ENCODE measurements at regions of chr3 and their contacts with region 1.

Region 1: DNA sequence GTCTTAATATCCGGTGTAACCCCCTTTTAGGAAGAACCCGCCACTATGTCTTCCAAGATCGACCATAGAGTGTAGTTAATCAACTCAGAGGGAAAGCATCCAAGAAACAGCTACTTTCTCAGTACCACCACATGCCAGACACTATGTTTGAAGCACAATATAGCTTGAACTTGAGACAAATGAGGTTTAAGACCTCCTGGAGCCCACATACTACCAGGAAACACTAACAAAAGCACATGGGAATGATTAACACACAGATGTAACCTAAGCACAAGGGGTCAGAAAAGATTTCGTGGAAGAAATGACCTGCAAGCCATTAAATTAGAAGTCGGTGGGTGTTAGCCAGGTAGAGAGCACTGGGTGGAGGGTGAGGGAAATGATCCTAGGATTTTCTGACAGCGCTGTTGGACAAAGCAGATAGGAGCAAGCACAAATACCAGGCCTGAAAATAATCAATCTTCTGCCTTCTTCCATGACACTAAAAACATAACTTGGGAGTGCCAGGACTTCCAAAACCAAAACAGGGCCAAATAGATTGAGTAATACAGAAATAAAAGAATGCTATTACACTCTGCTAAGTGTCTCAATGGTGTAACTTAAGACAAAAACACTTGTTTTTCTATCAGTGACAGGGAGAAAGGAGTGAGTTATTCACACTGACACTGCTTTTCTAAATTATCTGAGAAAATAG is 213.7 kb downstream of the FOXP1 start:
- DNase-seq: no peak
- ATAC-seq: no peak
- H3K4me3 ChIP-seq: no peak overlapping the region
- H3K4me3 Mint-ChIP-seq: peak overlapping the region in 2 of 10 donors; percentile 12 to 73
- H3K27ac ChIP-seq: peak overlapping the region; percentile 88
- H3K27ac Mint-ChIP-seq: peak overlapping the region in 8 of 9 donors; percentile 88 to 100 (median 96)
- H3K4me1 ChIP-seq: peaks cover 19 to 78% of the 10 kb centered on the region in 2 donors
- H3K4me1 Mint-ChIP-seq: peaks cover 10 to 94% (median 89%) of the 10 kb centered on the region in 7 donors
- H3K27me3 ChIP-seq: no peaks in the 10 kb centered on the region
- H3K27me3 Mint-ChIP-seq: peaks cover 0 to 39% (median 0%) of the 10 kb centered on the region in 5 donors

Region 2: GRCh38 chr3:71339049-71339448 is 30.8 kb before region 1 on chr3:
- CTCF ChIA-PET with region 1: no interaction called
- POLR2A ChIA-PET with region 1: interaction called, 3 read pairs
- intact Hi-C with region 1: loop called in 1 of 2 experiments (anchors 5 kb)
- DNase-seq: no peak
- ATAC-seq: no peak
- H3K4me3 ChIP-seq: no peak overlapping the region
- H3K4me3 Mint-ChIP-seq: peak overlapping the region in 3 of 10 donors; percentile 9 to 18 (median 17)
- H3K27ac ChIP-seq: no peak overlapping the region
- H3K27ac Mint-ChIP-seq: peak overlapping the region in 7 of 9 donors; percentile 0 to 83 (median 33)
- H3K4me1 ChIP-seq: peaks cover 0 to 12% of the 10 kb centered on the region in 2 donors
- H3K4me1 Mint-ChIP-seq: peaks cover 0 to 82% (median 69%) of the 10 kb centered on the region in 7 donors
- H3K27me3 ChIP-seq: no peaks in the 10 kb centered on the region
- H3K27me3 Mint-ChIP-seq: peaks cover 0 to 2% (median 0%) of the 10 kb centered on the region in 5 donors

Region 3: DNA sequence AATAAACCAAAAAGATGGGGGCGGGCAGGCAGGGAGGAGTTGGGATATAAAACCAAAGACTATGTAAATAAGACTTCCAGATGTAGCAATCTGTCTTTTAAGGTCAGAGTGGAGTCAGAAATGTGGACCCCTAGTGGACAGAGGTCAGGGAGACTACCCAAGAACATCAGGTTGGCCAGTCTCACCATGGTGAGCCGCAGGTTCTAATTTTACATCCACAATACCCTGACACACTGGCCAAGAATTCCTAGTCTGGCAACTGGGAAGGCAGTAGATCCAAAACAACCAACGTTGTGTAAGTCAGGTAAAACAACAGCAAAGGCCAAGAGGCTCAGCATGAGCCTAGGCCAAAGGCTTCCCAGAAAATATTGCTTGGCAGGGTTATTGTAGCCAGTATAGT is 10.2 kb after region 1 on chr3:
- CTCF ChIA-PET with region 1: interaction called, 3 read pairs
- POLR2A ChIA-PET with region 1: interaction called, 10 read pairs
- intact Hi-C with region 1: loop called in 1 of 2 experiments (anchors 1 kb)
- DNase-seq: no peak
- ATAC-seq: no peak
- H3K4me3 ChIP-seq: no peak overlapping the region
- H3K4me3 Mint-ChIP-seq: peak overlapping the region in 2 of 10 donors; percentile 1 to 29
- H3K27ac ChIP-seq: no peak overlapping the region
- H3K27ac Mint-ChIP-seq: peak overlapping the region in 8 of 9 donors; percentile 21 to 84 (median 68)
- H3K4me1 ChIP-seq: peaks cover 7 to 65% of the 10 kb centered on the region in 2 donors
- H3K4me1 Mint-ChIP-seq: peaks cover 15 to 95% (median 87%) of the 10 kb centered on the region in 7 donors
- H3K27me3 ChIP-seq: no peaks in the 10 kb centered on the region
- H3K27me3 Mint-ChIP-seq: peaks cover 0 to 15% (median 0%) of the 10 kb centered on the region in 5 donors

Region 4: DNA sequence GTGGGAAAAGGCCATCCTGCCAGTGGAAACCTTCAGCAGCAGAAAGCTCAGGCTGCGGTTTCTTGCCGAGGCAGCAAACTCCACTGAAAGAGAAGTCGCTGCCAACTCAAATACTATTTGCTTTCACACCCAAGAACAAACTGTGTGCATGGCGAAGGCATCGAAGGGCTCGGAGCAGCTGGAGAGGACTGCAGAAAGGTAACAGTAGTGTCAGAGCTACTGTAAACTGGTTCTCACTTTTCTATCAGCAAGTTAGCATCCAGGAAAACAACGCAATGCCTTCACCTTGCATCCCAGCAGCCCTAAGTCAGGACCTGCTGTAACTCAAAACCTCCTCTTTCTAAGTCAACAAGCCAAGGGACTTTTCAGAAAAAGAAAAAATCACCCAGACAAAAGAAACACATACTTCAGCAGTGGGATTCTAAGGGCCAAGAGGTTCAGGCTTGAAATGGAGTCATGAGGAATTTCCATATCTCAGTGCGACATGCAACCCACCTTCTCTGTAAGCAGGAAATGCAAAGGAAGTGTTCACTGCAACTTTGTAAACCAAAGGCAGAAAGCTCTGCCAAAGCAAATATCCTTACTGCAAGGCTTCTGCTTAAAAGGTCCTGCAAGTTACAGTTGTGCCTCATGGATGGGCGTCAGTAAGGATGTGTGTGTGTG is 20.2 kb after region 1 on chr3:
- CTCF ChIA-PET with region 1: no interaction called
- POLR2A ChIA-PET with region 1: interaction called, 21 read pairs
- intact Hi-C with region 1: loop called in 1 of 2 experiments (anchors 1 kb)
- DNase-seq: peak in 8 of 9 donors; percentile 25 to 67 (median 49)
- ATAC-seq: peak; percentile 55
- H3K4me3 ChIP-seq: peak overlapping the region; percentile 51
- H3K4me3 Mint-ChIP-seq: peak overlapping the region; percentile 68 to 88 (median 83)
- H3K27ac ChIP-seq: peak overlapping the region; percentile 81
- H3K27ac Mint-ChIP-seq: peak overlapping the region; percentile 75 to 99 (median 90)
- H3K4me1 ChIP-seq: peaks cover 29 to 74% of the 10 kb centered on the region in 2 donors
- H3K4me1 Mint-ChIP-seq: peaks cover 27 to 93% (median 83%) of the 10 kb centered on the region in 7 donors
- H3K27me3 ChIP-seq: no peaks in the 10 kb centered on the region
- H3K27me3 Mint-ChIP-seq: peaks cover 0 to 22% (median 0%) of the 10 kb centered on the region in 5 donors

Region 5: GRCh38 chr3:71495708-71496472 is 126.0 kb after region 1 on chr3:
- CTCF ChIA-PET with region 1: interaction called, 4 read pairs
- POLR2A ChIA-PET with region 1: no interaction called
- intact Hi-C with region 1: loop called in 1 of 2 experiments (anchors 1 kb)
- DNase-seq: peak in 2 of 9 donors; percentile 24 to 34
- ATAC-seq: no peak
- H3K4me3 ChIP-seq: peak overlapping the region; percentile 33
- H3K4me3 Mint-ChIP-seq: peak overlapping the region; percentile 52 to 98 (median 80)
- H3K27ac ChIP-seq: peak overlapping the region; percentile 89
- H3K27ac Mint-ChIP-seq: peak overlapping the region; percentile 77 to 100 (median 98)
- H3K4me1 ChIP-seq: peaks cover 43 to 71% of the 10 kb centered on the region in 2 donors
- H3K4me1 Mint-ChIP-seq: peaks cover 54 to 90% (median 85%) of the 10 kb centered on the region in 7 donors
- H3K27me3 ChIP-seq: no peaks in the 10 kb centered on the region
- H3K27me3 Mint-ChIP-seq: no peaks in the 10 kb centered on the region